Activated B cell treated with CpG ODN at 0.5 μM for 24 hours (primary cell): ENCODE measurements at regions of chr14 and their contacts with region 1.

Region 1: DNA sequence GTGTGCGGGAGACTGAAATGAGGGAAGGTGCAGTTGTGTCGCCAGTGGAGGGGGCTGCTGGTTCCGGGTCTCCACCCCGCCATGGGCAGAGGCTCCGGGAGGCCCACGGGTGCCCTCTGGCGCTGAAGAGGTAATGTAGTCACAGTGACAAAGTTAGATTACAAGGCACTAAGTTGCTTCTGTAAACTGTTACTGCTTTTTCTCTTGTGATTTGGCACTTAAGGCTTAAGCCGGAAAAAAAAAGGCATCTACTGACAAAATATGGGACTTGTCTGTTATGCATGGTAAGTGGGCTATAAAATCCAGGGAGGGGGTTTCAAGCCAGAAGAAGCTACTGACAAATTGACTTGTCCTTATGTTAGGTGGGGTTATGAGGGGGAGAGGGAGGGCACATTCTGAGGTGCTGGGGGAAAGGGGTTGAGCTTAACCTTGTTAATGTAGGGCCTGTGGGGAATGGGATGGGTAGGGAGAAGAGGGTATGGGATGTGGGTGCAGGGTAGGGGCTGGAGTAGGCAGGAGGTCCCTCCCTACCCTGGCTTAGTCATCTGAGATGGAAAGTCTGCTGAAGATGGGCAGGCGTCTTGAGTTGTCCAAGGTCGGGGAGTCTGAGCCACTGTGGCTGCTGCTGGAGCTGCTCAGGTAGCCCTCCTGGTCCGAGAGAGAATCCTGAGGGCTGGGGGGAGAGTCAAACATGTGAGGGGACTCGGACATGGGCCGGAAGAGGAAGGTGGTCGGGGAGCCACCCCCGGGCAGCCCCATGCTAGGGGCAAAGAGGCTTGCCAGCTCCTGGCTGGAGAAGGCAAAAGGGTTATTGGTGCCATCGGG is 3.7 kb downstream of the ZFP36L1 start:
- DNase-seq: peak; percentile 62
- ATAC-seq: no peak
- H3K4me3 Mint-ChIP-seq: peak overlapping the region; percentile 100
- H3K27ac Mint-ChIP-seq: peak overlapping the region; percentile 99
- H3K4me1 Mint-ChIP-seq: peaks cover 54% of the 10 kb centered on the region
- H3K27me3 Mint-ChIP-seq: no peaks in the 10 kb centered on the region
- CTCF ChIP-seq: no peak

Region 2: GRCh38 chr14:67784244-67784823 is 1004.9 kb before region 1 on chr14:
- CTCF ChIA-PET with region 1: no interaction called
- POLR2A ChIA-PET with region 1: no interaction called
- intact Hi-C with region 1: no loop called
- DNase-seq: no peak
- ATAC-seq: no peak
- H3K4me3 Mint-ChIP-seq: no peak overlapping the region
- H3K27ac Mint-ChIP-seq: no peak overlapping the region
- H3K4me1 Mint-ChIP-seq: no peaks in the 10 kb centered on the region
- H3K27me3 Mint-ChIP-seq: no peaks in the 10 kb centered on the region
- CTCF ChIP-seq: no peak

Region 3: GRCh38 chr14:68223631-68224030 is 565.6 kb before region 1 on chr14:
- CTCF ChIA-PET with region 1: no interaction called
- POLR2A ChIA-PET with region 1: no interaction called
- intact Hi-C with region 1: no loop called
- DNase-seq: no peak
- ATAC-seq: no peak
- H3K4me3 Mint-ChIP-seq: no peak overlapping the region
- H3K27ac Mint-ChIP-seq: no peak overlapping the region
- H3K4me1 Mint-ChIP-seq: no peaks in the 10 kb centered on the region
- H3K27me3 Mint-ChIP-seq: no peaks in the 10 kb centered on the region
- CTCF ChIP-seq: no peak

Region 4: GRCh38 chr14:68274725-68275124 is 514.5 kb before region 1 on chr14:
- CTCF ChIA-PET with region 1: interaction called, 3 read pairs
- POLR2A ChIA-PET with region 1: interaction called, 413 read pairs
- intact Hi-C with region 1: loop called (anchors 2 kb)
- DNase-seq: no peak
- ATAC-seq: no peak
- H3K4me3 Mint-ChIP-seq: peak overlapping the region; percentile 65
- H3K27ac Mint-ChIP-seq: peak overlapping the region; percentile 99
- H3K4me1 Mint-ChIP-seq: peaks cover 93% of the 10 kb centered on the region
- H3K27me3 Mint-ChIP-seq: no peaks in the 10 kb centered on the region
- CTCF ChIP-seq: no peak

Region 5: GRCh38 chr14:68471029-68471963 is 317.9 kb before region 1 on chr14:
- CTCF ChIA-PET with region 1: no interaction called
- POLR2A ChIA-PET with region 1: interaction called, 63 read pairs
- intact Hi-C with region 1: loop called (anchors 2 kb)
- DNase-seq: peak; percentile 22
- ATAC-seq: peak; percentile 69
- H3K4me3 Mint-ChIP-seq: peak overlapping the region; percentile 38
- H3K27ac Mint-ChIP-seq: peak overlapping the region; percentile 96
- H3K4me1 Mint-ChIP-seq: peaks cover 85% of the 10 kb centered on the region
- H3K27me3 Mint-ChIP-seq: no peaks in the 10 kb centered on the region
- CTCF ChIP-seq: no peak

Region 6: GRCh38 chr14:68535404-68536017 is 253.7 kb before region 1 on chr14:
- CTCF ChIA-PET with region 1: no interaction called
- POLR2A ChIA-PET with region 1: interaction called, 11 read pairs
- intact Hi-C with region 1: no loop called
- DNase-seq: no peak
- ATAC-seq: no peak
- H3K4me3 Mint-ChIP-seq: no peak overlapping the region
- H3K27ac Mint-ChIP-seq: no peak overlapping the region
- H3K4me1 Mint-ChIP-seq: peaks cover 3% of the 10 kb centered on the region
- H3K27me3 Mint-ChIP-seq: no peaks in the 10 kb centered on the region
- CTCF ChIP-seq: no peak

Region 7: DNA sequence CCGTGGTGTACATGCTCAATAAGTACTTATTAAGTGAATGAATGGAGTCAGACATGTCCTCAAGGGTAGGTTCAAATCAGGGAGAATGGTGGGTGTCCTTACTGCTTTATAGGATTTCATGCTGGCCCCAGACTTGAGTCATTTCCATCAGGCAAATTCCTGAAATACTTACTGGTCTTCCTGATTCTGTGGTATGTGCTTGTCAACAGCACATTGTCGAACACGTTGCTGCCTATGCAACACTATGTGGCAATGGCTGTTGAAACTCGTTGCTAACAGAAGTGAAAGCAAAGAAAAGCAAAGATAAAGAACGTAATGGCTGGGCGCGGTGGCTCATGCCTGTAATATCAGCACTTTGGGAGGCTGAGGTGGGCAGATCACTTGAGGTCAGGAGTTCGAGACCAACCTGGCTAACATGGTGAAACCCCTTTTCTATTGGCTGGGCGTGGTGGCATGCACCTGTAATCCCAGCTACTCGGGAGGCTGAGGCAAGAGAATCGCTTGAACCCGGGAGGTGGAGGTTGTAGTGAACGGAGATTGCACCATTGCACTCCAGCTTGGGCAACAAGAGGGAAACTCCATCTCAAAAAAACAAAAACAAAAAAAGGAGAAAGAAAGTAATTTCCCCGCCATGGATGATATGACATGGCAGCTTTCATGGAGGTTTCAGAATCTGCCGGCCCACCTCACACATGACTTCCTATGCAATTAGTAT is 211.2 kb before region 1 on chr14:
- CTCF ChIA-PET with region 1: no interaction called
- POLR2A ChIA-PET with region 1: no interaction called
- intact Hi-C with region 1: no loop called
- DNase-seq: no peak
- ATAC-seq: no peak
- H3K4me3 Mint-ChIP-seq: no peak overlapping the region
- H3K27ac Mint-ChIP-seq: no peak overlapping the region
- H3K4me1 Mint-ChIP-seq: no peaks in the 10 kb centered on the region
- H3K27me3 Mint-ChIP-seq: no peaks in the 10 kb centered on the region
- CTCF ChIP-seq: no peak

Region 8: DNA sequence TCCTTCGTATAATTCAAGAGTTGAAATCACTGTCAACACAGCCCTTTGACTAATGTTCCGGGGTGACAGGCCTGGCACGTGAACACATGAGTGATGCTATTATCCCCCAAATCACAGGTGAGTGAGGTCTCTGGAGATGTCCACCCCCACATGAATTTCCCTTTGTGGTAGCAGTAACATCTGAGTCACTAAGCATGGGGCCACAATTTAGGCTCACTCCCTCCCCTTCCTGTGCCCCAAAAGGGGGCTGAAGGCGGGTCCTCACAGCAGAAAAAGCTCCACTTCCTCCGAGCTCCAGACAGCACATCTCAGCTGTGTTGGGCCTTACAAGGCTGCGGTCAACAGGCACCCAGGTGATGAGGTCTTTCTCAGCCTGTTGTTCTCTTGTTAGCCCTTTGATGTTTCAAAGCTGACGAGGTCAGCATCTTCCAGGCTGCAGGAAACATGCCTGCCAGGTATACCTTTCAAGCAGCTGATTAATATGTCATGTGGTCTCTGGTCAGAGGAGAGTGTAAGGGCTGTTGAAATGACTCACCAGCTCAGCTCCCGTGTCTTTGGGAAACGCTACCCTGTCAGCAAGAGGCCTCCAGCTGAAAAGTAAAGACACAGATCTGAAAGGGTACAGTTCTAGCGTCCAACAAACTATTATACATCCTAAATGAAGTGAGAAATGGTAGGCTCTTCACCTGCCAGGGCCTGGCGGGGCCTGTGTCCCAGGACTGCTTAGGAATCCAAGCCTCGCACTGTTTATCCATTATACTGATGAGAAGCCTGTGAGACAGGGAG is 103.6 kb before region 1 on chr14:
- CTCF ChIA-PET with region 1: interaction called, 7 read pairs
- POLR2A ChIA-PET with region 1: interaction called, 604 read pairs
- intact Hi-C with region 1: loop called (anchors 1 kb)
- DNase-seq: peak; percentile 65
- ATAC-seq: peak; percentile 76
- H3K4me3 Mint-ChIP-seq: peak overlapping the region; percentile 73
- H3K27ac Mint-ChIP-seq: peak overlapping the region; percentile 97
- H3K4me1 Mint-ChIP-seq: peaks cover 87% of the 10 kb centered on the region
- H3K27me3 Mint-ChIP-seq: no peaks in the 10 kb centered on the region
- CTCF ChIP-seq: no peak

Region 9: GRCh38 chr14:68757618-68758081 is 31.6 kb before region 1 on chr14:
- CTCF ChIA-PET with region 1: no interaction called
- POLR2A ChIA-PET with region 1: interaction called, 14 read pairs
- intact Hi-C with region 1: no loop called
- DNase-seq: no peak
- ATAC-seq: peak; percentile 88
- H3K4me3 Mint-ChIP-seq: no peak overlapping the region
- H3K27ac Mint-ChIP-seq: peak overlapping the region; percentile 18
- H3K4me1 Mint-ChIP-seq: peaks cover 33% of the 10 kb centered on the region
- H3K27me3 Mint-ChIP-seq: no peaks in the 10 kb centered on the region
- CTCF ChIP-seq: no peak